Left cardiac atrium (tissue), 4 donors: ENCODE measurements at regions of chr11 and their contacts with region 1.

Region 1: DNA sequence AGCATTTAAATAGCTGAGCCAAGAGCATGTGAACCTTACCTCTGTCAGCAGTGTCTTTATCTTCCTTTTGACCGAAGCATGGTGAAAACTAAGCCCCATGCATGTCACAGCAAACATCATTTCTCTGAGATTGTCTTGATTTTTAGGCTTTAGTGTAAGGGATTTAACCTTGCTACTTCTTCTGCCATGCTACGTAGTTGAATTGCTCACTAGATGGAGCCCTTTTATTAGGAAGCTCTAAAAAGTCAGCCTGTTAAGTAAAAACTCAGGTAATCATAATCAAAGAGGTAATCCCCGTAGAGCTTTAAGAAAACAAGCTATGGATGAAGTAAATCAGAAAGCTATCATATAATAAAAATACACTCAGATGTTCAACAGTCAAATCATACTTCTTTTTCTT is 149.5 kb downstream of the PGR start:
- DNase-seq: no peak
- ATAC-seq: peak in 1 of 2 donors; percentile 50

Region 2: DNA sequence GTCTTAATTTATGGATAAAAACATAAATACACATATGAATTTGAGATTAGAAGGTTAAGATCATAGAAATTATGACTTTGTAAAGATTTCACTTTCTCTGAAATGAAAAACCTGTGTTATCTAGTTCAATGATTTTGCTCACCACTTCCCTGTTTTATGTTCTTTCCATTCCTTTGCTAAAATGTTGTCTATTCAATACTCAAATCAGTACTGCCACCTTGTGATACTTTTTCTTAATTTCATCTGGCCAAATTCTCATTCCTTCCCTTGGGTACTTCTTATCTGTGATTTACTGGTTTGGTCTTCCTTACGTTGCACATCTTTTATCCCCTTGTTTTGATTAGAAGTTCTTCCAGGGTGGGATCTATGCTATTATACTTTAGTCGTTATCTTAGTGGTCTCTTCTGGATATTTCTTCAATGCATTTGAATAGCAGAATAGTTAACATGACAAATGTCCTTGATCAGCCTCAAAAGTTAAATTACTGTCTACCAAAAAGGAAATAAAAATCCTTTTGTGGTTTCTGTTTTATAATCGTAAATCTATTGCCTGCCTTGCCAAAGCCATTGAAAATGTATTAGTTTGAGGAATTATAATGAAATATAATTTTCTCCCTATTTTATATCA is 47.6 kb before region 1 on chr11:
- intact Hi-C with region 1: no loop called
- DNase-seq: no peak
- ATAC-seq: no peak

Region 3: DNA sequence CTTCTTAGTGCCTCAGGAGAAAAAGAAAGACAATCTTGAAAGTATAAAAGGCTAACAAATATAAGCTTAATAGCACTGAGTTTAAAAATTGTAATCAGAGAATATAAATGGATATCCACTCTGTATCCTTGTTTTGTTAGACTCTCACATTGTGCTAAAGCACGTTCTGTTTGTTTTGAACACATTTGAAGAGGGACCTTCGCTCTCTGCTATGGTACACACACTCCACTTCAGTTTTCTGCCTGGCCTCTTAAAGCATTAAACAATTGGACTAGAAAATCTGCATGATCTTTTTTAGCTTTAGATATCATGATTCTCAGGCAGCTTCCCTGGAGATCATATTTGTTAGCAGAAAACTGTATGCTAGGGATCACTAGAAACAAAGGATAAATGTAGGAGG is 189.8 kb after region 1 on chr11:
- intact Hi-C with region 1: no loop called
- DNase-seq: no peak
- ATAC-seq: no peak

Region 4: DNA sequence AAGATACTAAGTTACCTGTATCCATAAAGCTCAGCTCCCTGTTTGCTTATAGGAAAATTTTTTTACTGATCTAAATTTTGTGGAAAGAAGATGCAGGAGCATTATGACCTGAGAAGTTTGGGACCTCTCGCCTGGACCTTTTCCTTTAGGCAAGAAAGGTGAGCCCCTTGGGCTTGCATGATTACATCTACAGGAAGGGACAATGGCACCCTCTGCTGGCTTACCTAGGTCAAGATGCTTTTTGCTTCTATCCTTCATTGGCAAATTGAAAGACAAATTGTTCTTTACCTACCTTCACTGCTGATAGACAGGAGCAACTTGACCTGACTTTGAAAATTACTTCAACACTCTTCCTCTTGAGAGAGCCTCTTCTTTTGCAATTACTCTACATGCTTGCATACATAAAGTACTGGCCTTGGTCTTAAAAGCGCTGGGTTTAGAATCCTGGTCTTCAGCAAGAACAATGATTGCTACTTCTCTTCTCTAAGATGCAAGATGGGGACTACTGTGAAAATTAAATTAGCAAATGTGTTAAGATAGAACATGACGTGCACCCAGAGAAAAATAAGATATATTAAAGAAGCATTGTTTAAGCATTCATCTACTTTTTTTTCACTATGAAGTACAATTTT is 456.5 kb after region 1 on chr11:
- intact Hi-C with region 1: loop called (anchors 5 kb)
- DNase-seq: peak; percentile 29
- ATAC-seq: no peak